ENCODE measurements at regions of chr11 and their contacts with region 1.

Region 1: DNA sequence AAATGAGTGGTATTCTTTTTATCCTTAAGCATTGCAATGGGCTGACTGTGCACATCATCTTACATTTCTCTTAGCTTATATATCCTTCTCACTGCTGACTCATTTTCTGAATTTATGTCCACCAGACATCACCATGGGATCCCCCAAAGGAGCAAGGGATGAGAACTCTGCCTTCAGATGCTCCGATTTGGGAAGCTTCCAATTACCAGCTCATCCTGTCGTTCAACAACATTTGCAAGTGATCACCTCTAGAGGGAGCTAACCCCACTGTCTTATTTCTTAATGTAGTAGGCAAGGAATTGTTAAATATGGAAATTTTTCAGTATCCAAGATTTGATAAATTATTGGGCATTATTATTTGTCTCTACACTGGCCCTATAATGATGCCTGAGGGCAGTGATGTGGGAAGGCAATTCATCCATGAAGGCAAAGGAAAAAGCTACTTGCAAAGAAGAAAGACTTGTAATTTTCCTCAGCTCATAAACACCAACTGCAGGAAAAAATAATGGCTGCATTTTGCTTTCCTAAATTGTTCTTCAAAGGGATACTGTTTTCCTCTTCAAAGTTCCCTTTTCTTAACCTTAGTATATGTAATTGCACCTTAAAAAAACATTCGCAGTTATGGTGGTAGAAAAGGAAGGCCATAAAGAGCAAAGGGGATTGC is 102.4 kb upstream of the FSHB start:
- DNase-seq: no peak
- ATAC-seq: peak; percentile 68
- H3K4me3 ChIP-seq: no peak overlapping the region
- H3K27ac ChIP-seq: no peak overlapping the region
- H3K4me1 ChIP-seq: no peaks in the 10 kb centered on the region
- H3K27me3 ChIP-seq: no peaks in the 10 kb centered on the region
- CTCF ChIP-seq: peak; percentile 59 to 69 (median 64)
- EP300 ChIP-seq: no peak
- POLR2A ChIP-seq: no peak
- RAD21 ChIP-seq: peak; percentile 57

Region 2: DNA sequence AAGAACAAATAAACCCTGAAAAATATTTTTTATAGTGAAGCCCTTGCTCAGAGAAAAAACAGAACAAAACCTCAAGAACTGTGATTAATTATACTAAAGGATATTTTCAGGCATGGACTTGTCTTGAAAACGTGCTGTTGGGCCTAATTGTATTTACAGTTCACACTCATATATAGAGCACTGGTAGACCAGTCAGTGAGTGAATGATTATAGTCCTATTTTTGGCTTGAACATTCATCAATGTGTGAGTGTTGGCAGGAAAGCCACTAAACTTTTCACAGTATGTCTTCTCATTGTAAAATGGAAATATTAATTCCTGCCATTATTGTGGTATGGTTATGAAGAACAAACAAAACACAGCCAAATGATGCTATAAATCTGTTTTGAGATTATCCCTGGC is 574.4 kb before region 1 on chr11:
- CTCF ChIA-PET with region 1: no interaction called
- POLR2A ChIA-PET with region 1: no interaction called
- RAD21 ChIA-PET with region 1: no interaction called
- SMC1A ChIA-PET with region 1: no interaction called
- in situ Hi-C with region 1: no loop called
- intact Hi-C with region 1: no loop called
- DNase-seq: no peak
- ATAC-seq: no peak
- H3K4me3 ChIP-seq: no peak overlapping the region
- H3K27ac ChIP-seq: no peak overlapping the region
- H3K4me1 ChIP-seq: no peaks in the 10 kb centered on the region
- H3K27me3 ChIP-seq: no peaks in the 10 kb centered on the region; a peak in 1 of 4 replicates
- CTCF ChIP-seq: no peak
- EP300 ChIP-seq: no peak
- POLR2A ChIP-seq: no peak
- RAD21 ChIP-seq: no peak

Region 3: DNA sequence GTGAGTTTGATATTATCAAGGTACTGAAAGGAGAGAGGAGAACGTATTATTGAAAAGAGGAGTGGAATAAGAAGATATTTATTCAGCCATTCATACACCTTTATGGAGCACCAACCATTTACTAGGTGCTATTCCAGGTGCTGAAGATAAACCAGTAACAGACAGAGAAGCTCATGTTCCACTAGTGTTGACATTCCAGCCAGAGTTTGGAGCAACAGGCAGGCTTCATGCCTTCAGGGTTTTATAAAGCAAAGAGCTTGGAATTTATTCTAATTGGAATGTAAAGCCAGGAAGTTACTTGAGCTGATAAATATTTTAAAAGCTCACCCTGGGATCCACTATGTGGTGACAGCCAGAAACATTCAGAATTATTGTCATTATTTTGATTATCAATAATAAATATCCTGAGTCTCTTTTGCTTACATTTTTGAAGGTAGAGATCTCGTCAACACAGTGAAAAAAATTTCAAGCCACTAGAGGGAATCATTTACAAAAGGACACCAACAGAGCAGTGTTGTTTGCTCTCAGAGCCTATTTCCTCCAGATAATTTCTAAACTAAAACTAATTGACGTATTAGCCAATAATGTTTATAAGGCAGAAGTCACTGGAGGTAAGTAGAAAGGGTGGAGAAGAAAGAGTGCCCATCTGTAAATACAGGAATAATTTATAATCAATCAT is 283.6 kb before region 1 on chr11:
- CTCF ChIA-PET with region 1: no interaction called
- POLR2A ChIA-PET with region 1: no interaction called
- RAD21 ChIA-PET with region 1: no interaction called
- SMC1A ChIA-PET with region 1: no interaction called
- in situ Hi-C with region 1: no loop called
- intact Hi-C with region 1: no loop called
- DNase-seq: no peak
- ATAC-seq: no peak
- H3K4me3 ChIP-seq: no peak overlapping the region
- H3K27ac ChIP-seq: no peak overlapping the region
- H3K4me1 ChIP-seq: no peaks in the 10 kb centered on the region
- H3K27me3 ChIP-seq: no peaks in the 10 kb centered on the region
- CTCF ChIP-seq: no peak
- EP300 ChIP-seq: no peak
- POLR2A ChIP-seq: no peak
- RAD21 ChIP-seq: no peak

Region 4: GRCh38 chr11:30107899-30108298 is 20.5 kb before region 1 on chr11:
- CTCF ChIA-PET with region 1: interaction called, 21 read pairs
- POLR2A ChIA-PET with region 1: no interaction called
- RAD21 ChIA-PET with region 1: no interaction called
- SMC1A ChIA-PET with region 1: interaction called, 7 read pairs
- in situ Hi-C with region 1: no loop called
- intact Hi-C with region 1: no loop called
- DNase-seq: no peak
- ATAC-seq: no peak
- H3K4me3 ChIP-seq: no peak overlapping the region
- H3K27ac ChIP-seq: no peak overlapping the region
- H3K4me1 ChIP-seq: no peaks in the 10 kb centered on the region
- H3K27me3 ChIP-seq: no peaks in the 10 kb centered on the region
- CTCF ChIP-seq: no peak
- EP300 ChIP-seq: no peak
- POLR2A ChIP-seq: no peak
- RAD21 ChIP-seq: no peak

Region 5: DNA sequence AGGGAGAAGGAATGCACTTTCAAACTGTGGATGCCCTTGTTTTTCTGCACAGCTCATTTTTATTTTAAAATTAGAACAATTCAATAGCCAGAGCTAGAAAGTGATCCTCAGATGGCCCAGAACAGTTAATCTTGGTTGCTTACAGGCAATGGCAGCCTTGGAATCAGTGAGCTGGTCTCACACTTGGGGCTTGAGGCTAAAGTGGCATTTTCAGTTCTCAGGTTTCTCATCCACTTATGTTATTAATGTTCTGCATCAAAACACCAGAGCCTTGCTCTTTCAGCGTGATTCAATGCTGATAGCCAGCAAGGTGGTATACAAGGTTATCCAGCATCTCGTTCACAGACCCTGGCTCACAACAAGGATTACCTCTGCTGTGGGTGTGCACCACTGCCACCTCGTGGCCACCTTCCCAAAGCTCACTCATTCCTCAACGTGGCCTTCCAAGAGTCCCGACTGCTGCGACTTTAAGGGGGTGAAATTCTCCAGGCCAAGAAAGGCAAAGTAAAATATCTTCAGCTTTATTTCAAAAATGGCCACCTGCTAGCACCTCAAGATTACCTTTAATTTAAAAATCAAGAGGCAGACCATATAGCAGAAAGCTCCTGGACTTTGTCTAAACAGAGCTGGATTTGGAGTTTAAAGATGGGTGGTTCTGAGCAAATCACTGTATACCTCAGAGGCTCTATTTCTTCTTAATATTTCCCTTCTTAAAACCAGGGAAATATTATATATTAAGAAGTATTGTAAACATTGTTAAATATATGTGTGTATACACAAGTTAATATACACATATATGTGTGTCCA is 68.2 kb after region 1 on chr11:
- CTCF ChIA-PET with region 1: interaction called, 52 read pairs
- POLR2A ChIA-PET with region 1: no interaction called
- RAD21 ChIA-PET with region 1: interaction called, 15 read pairs
- SMC1A ChIA-PET with region 1: interaction called, 16 read pairs
- in situ Hi-C with region 1: no loop called
- intact Hi-C with region 1: loop called (anchors 5 kb)
- DNase-seq: no peak
- ATAC-seq: peak; percentile 98
- H3K4me3 ChIP-seq: no peak overlapping the region
- H3K27ac ChIP-seq: no peak overlapping the region
- H3K4me1 ChIP-seq: no peaks in the 10 kb centered on the region
- H3K27me3 ChIP-seq: no peaks in the 10 kb centered on the region; a peak in 1 of 4 replicates
- CTCF ChIP-seq: peak; percentile 76 to 88 (median 85)
- EP300 ChIP-seq: no peak
- POLR2A ChIP-seq: no peak
- RAD21 ChIP-seq: peak; percentile 73

Region 6: GRCh38 chr11:30244265-30244664 is 115.9 kb after region 1 on chr11:
- CTCF ChIA-PET with region 1: interaction called, 83 read pairs
- POLR2A ChIA-PET with region 1: no interaction called
- RAD21 ChIA-PET with region 1: interaction called, 32 read pairs
- SMC1A ChIA-PET with region 1: interaction called, 43 read pairs
- in situ Hi-C with region 1: no loop called
- intact Hi-C with region 1: no loop called
- DNase-seq: no peak
- ATAC-seq: no peak
- H3K4me3 ChIP-seq: no peak overlapping the region
- H3K27ac ChIP-seq: no peak overlapping the region
- H3K4me1 ChIP-seq: no peaks in the 10 kb centered on the region
- H3K27me3 ChIP-seq: 0 out of 4 replicates have a peak, but pooled peaks cover 0 to 1% of the 10 kb centered on the region in 2 experiments
- CTCF ChIP-seq: no peak
- EP300 ChIP-seq: no peak
- POLR2A ChIP-seq: no peak
- RAD21 ChIP-seq: no peak

Region 7: DNA sequence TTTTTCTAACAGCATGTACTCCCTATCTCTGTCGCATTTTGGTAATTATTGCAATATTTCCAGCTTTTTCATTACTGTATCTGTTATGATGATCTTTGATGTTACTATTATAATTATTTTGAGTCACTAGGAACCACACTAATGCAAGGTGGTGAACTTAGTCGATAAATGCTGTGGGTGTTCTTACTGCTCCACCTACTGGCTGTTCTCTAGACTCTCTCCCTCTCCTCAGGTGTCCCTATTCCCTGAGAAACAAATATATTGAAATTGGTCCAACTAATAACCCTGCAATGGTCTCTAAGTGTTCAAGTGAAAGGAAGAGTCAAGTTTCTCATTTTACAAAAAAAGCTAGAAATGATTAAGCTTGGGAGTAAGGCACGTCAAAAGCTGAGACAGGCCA is 205.0 kb after region 1 on chr11:
- CTCF ChIA-PET with region 1: interaction called, 49 read pairs
- POLR2A ChIA-PET with region 1: no interaction called
- RAD21 ChIA-PET with region 1: interaction called, 14 read pairs
- SMC1A ChIA-PET with region 1: interaction called, 21 read pairs
- in situ Hi-C with region 1: no loop called
- intact Hi-C with region 1: loop called (anchors 5 kb)
- DNase-seq: no peak
- ATAC-seq: peak; percentile 82
- H3K4me3 ChIP-seq: no peak overlapping the region
- H3K27ac ChIP-seq: no peak overlapping the region
- H3K4me1 ChIP-seq: no peaks in the 10 kb centered on the region
- H3K27me3 ChIP-seq: no peaks in the 10 kb centered on the region
- CTCF ChIP-seq: peak; percentile 48 to 55 (median 49); a peak in 5 of 6 replicates
- EP300 ChIP-seq: no peak
- POLR2A ChIP-seq: no peak
- RAD21 ChIP-seq: peak; percentile 56

Measured in GM12878 (cell line).